H1 (cell line): ENCODE measurements at regions of chr22 and their contacts with region 1.

Region 1: DNA sequence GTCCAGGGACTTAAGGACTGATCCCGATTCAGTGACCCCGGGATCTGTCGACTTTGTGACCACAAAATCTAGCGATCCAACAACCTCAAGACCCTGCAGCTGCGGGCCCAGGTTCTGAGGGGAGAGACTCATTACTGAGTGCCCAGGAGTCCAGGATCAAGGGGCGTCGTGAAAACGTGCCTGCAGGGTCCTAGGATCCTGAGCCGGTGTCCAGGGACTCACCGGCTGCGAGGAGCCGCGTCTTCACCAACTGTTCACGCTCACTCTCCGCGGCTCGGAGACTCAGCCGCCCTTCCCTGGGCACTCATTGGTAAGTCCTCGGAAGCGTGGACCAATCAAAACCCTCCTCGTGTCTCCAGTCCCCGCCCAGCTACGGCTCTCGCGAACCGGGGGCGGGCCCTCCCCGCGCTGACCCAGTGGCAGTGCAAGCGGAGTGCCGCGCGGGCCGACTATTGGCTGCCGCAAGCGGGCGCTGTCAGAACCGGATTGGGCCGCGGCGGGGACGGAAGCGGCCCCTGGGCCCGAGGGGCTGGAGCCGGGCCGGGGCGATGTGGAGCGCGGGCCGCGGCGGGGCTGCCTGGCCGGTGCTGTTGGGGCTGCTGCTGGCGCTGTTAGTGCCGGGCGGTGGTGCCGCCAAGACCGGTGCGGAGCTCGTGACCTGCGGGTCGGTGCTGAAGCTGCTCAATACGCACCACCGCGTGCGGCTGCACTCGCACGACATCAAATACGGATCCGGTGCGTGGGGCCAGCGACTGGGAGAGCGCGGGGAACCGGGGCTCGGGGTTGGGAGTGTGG is at the start of gene SDF2L1:
- DNase-seq: peak; percentile 92 to 96
- H3K4me3 ChIP-seq: peak within 1 kb of the TSS; percentile 65 to 77 (median 72)
- H3K27ac ChIP-seq: no peak within 1 kb of the TSS
- H3K4me1 ChIP-seq: peaks cover 0 to 5% (median 2%) of the 10 kb centered on the region in 4 experiments; a peak in 4 of 7 replicates
- H3K27me3 ChIP-seq: peaks cover 0 to 7% (median 1%) of the 10 kb centered on the region in 4 experiments; a peak in 3 of 7 replicates
- CTCF ChIP-seq: 0 out of 4 replicates have a peak, but pooled peaks of 1 of the 3 experiments have one; percentile 2
- EP300 ChIP-seq: peak in 1 of 2 experiments; percentile 18; a peak in 1 of 3 replicates
- POLR2A ChIP-seq: peak in 1 of 2 experiments; percentile 64; a peak in 2 of 3 replicates
- RAD21 ChIP-seq: no peak
- total RNA-seq, gene SDF2L1: 51.1 and 54.5 TPM in 2 replicates

Region 2: GRCh38 chr22:21450320-21450831 is 191.6 kb before region 1 on chr22:
- CTCF ChIA-PET with region 1: interaction called, 11 read pairs
- POLR2A ChIA-PET with region 1: no interaction called
- DNase-seq: peak in 1 of 2 experiments; percentile 59
- H3K4me3 ChIP-seq: no peak overlapping the region
- H3K27ac ChIP-seq: no peak overlapping the region
- H3K4me1 ChIP-seq: peaks cover 0 to 3% (median under 1%) of the 10 kb centered on the region in 4 experiments; a peak in 2 of 7 replicates
- H3K27me3 ChIP-seq: no peaks in the 10 kb centered on the region
- CTCF ChIP-seq: peak; percentile 48 to 68 (median 59); a peak in 3 of 4 replicates
- EP300 ChIP-seq: no peak
- POLR2A ChIP-seq: no peak
- RAD21 ChIP-seq: peak; percentile 38 to 51; a peak in 2 of 4 replicates

Region 3: GRCh38 chr22:21593406-21594232 is 48.4 kb before region 1 on chr22:
- CTCF ChIA-PET with region 1: interaction called, 29 read pairs
- POLR2A ChIA-PET with region 1: no interaction called
- DNase-seq: peak in 1 of 2 experiments; percentile 56
- H3K4me3 ChIP-seq: no peak overlapping the region
- H3K27ac ChIP-seq: no peak overlapping the region
- H3K4me1 ChIP-seq: no peaks in the 10 kb centered on the region
- H3K27me3 ChIP-seq: no peaks in the 10 kb centered on the region
- CTCF ChIP-seq: peak; percentile 66 to 93 (median 85)
- EP300 ChIP-seq: no peak
- POLR2A ChIP-seq: no peak
- RAD21 ChIP-seq: peak; percentile 34 to 52; a peak in 3 of 4 replicates

Region 4: DNA sequence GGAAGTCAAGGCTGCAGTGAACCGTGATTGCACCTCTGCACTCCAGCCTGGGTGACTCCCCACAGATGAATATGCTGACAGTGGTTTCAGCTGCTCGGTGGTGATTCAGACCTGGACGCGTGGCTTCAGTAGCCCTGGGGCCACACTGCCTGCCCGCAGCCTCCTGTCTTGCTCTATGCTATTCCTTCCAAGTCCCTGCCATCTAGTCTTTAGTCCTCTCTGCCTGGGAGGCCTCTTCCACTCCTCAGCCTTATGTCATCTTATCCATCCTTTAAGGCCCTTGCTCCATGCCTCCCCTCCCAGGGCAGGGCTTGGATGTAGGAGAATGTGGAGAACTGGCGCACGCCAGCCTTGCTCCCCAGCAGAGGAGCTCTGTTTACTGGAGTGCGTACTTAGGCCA is 35.2 kb before region 1 on chr22:
- CTCF ChIA-PET with region 1: interaction called, 35 read pairs
- POLR2A ChIA-PET with region 1: interaction called, 4 read pairs
- DNase-seq: no peak
- H3K4me3 ChIP-seq: no peak overlapping the region
- H3K27ac ChIP-seq: no peak overlapping the region
- H3K4me1 ChIP-seq: no peaks in the 10 kb centered on the region
- H3K27me3 ChIP-seq: no peaks in the 10 kb centered on the region
- CTCF ChIP-seq: no peak
- EP300 ChIP-seq: no peak
- POLR2A ChIP-seq: no peak
- RAD21 ChIP-seq: no peak

Region 5: GRCh38 chr22:21652010-21652546 is 10.1 kb after region 1 on chr22:
- CTCF ChIA-PET with region 1: interaction called, 499 read pairs
- POLR2A ChIA-PET with region 1: interaction called, 42 read pairs
- DNase-seq: peak in 1 of 2 experiments; percentile 94
- H3K4me3 ChIP-seq: peak overlapping the region; percentile 78 to 98 (median 81)
- H3K27ac ChIP-seq: peak overlapping the region; percentile 31; the same call in 1 of the 2 replicates
- H3K4me1 ChIP-seq: peaks cover 3 to 21% (median 9%) of the 10 kb centered on the region in 4 experiments
- H3K27me3 ChIP-seq: no peaks in the 10 kb centered on the region
- CTCF ChIP-seq: no peak
- EP300 ChIP-seq: no peak
- POLR2A ChIP-seq: peak in 1 of 2 experiments; percentile 72; a peak in 2 of 3 replicates
- RAD21 ChIP-seq: no peak